CD8-positive, alpha-beta T cell (primary cell): ENCODE measurements at regions of chr4 and their contacts with region 1.

Region 1: DNA sequence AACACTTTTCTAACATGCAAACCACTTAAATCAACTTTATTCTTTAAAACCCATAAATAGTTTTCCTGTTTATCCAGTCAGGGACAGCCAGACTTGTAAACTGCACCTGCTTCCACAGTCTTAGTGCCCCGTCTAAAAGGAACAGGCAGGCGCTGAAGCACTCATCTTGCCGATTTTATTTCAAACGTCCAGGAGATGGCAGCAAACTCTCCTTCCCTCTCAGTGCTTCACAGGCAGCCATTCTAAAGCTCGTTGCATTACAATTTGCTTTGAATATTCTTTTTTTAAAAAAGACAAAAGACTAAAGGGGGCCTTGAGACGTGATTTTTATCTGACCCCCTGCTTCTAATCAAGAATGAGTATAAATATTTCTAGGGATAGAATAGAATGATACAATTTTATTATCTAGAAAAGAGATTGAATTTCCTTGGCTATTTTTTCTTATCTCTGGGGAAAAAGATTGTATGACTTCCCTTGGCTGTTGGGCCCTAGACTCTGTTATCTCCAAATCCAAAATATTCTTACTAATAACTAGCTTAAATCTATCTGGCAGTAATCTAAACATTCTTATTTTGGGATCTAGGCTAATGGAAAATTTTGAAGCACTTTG is 93.6 kb upstream of the MYOZ2 start:
- DNase-seq: peak; percentile 7 to 82 (median 53)
- ATAC-seq: peak; percentile 95
- H3K4me3 ChIP-seq: no peak overlapping the region
- H3K4me3 Mint-ChIP-seq: no peak overlapping the region
- H3K27ac ChIP-seq: no peak overlapping the region
- H3K27ac Mint-ChIP-seq: no peak overlapping the region
- H3K4me1 ChIP-seq: no peaks in the 10 kb centered on the region
- H3K4me1 Mint-ChIP-seq: peaks cover 2% of the 10 kb centered on the region
- H3K27me3 ChIP-seq: no peaks in the 10 kb centered on the region
- H3K27me3 Mint-ChIP-seq: no peaks in the 10 kb centered on the region
- CTCF ChIP-seq: peak; percentile 66

Region 2: DNA sequence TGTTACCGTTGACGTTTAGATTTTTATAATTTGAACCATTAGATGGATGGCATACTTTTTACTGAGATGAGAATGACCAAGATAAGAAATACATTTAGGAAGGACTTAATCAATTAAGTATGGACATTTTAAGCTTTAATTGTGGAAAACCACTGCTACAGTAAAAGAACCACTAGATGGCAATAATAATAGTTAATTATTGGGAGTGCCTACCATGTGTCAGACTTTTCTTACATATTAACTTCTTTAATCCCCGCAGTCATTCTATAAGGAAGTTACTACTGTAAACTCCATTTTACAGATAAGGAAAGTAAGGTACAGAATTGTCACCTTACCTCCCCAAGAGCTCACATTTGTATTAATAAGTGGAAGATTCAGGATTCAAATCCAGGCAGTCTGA is 45.1 kb after region 1 on chr4:
- CTCF ChIA-PET with region 1: interaction called, 10 read pairs
- POLR2A ChIA-PET with region 1: no interaction called
- intact Hi-C with region 1: no loop called
- DNase-seq: no peak
- ATAC-seq: no peak
- H3K4me3 ChIP-seq: no peak overlapping the region
- H3K4me3 Mint-ChIP-seq: no peak overlapping the region
- H3K27ac ChIP-seq: no peak overlapping the region
- H3K27ac Mint-ChIP-seq: no peak overlapping the region
- H3K4me1 ChIP-seq: no peaks in the 10 kb centered on the region
- H3K4me1 Mint-ChIP-seq: no peaks in the 10 kb centered on the region
- H3K27me3 ChIP-seq: no peaks in the 10 kb centered on the region
- H3K27me3 Mint-ChIP-seq: no peaks in the 10 kb centered on the region
- CTCF ChIP-seq: no peak

Region 3: DNA sequence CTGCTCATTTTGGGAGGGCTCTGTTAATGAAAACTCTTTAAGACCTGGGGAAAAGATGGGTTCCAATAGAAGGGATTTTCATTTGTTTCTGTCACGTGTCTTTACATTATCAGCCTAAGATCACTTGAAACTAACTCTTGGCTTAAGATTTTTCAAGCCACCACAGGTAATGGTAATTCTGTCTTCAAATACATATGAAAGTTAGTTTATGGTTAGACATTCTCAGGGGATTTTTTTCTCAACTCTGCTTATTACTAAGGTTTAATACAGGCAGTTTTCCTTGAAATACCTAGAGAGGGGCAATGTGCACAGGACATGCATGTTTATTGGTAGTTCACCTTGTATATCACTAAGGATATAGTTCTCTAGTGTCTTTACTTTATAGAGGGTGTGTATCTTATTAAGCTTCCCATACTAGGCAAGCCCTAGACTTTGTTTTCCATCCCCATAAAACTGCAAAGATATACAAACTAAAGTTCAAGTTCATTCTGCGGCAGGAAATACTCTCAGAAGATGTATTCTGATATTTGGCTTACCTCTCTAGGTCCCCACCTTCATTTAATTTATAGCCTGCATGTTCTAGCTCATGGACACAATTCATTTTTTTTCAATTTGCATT is 55.3 kb after region 1 on chr4:
- CTCF ChIA-PET with region 1: no interaction called
- POLR2A ChIA-PET with region 1: no interaction called
- intact Hi-C with region 1: no loop called
- DNase-seq: no peak
- ATAC-seq: no peak
- H3K4me3 ChIP-seq: no peak overlapping the region
- H3K4me3 Mint-ChIP-seq: no peak overlapping the region
- H3K27ac ChIP-seq: no peak overlapping the region
- H3K27ac Mint-ChIP-seq: no peak overlapping the region
- H3K4me1 ChIP-seq: no peaks in the 10 kb centered on the region
- H3K4me1 Mint-ChIP-seq: no peaks in the 10 kb centered on the region
- H3K27me3 ChIP-seq: no peaks in the 10 kb centered on the region
- H3K27me3 Mint-ChIP-seq: peaks cover 4% of the 10 kb centered on the region
- CTCF ChIP-seq: no peak

Region 4: DNA sequence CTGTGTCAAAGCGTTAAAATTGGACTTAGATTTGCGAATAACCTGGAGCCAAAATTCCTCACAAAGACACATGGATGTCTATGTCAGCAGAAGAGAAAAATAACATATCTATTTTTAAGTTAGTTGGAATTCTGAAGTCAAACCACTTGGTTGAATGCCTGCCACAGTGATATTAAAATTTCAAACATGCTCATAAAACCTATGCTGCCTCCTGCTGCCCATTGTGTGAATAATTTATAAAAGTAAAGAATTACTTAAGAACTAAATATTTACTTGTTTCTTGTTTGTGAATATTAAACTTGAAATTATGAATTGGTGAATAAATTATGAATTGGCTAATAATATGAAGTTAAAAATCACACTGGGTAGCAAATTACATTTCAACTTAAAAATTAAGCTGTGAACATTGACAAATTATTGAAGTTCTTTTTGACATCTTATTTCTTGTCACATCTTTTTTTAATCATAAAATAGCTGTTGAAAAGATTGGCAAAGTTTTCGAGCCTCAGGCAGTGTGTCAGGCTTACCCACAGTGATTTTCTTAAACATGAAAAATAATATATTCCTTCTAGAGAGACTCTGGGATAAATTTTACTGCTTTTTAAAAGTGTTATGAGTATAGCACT is 244.4 kb after region 1 on chr4:
- CTCF ChIA-PET with region 1: interaction called, 20 read pairs
- POLR2A ChIA-PET with region 1: no interaction called
- intact Hi-C with region 1: loop called (anchors 1 kb)
- DNase-seq: peak in 5 of 9 experiments; percentile 21 to 69 (median 34)
- ATAC-seq: peak; percentile 55
- H3K4me3 ChIP-seq: no peak overlapping the region
- H3K4me3 Mint-ChIP-seq: no peak overlapping the region
- H3K27ac ChIP-seq: no peak overlapping the region
- H3K27ac Mint-ChIP-seq: no peak overlapping the region
- H3K4me1 ChIP-seq: peaks cover 3% of the 10 kb centered on the region
- H3K4me1 Mint-ChIP-seq: peaks cover 30% of the 10 kb centered on the region
- H3K27me3 ChIP-seq: no peaks in the 10 kb centered on the region
- H3K27me3 Mint-ChIP-seq: no peaks in the 10 kb centered on the region
- CTCF ChIP-seq: peak; percentile 81

Region 5: GRCh38 chr4:119300101-119300978 is 258.3 kb after region 1 on chr4:
- CTCF ChIA-PET with region 1: interaction called, 15 read pairs
- POLR2A ChIA-PET with region 1: interaction called, 4 read pairs
- intact Hi-C with region 1: no loop called
- DNase-seq: peak; percentile 79 to 95 (median 89)
- ATAC-seq: peak; percentile 94
- H3K4me3 ChIP-seq: peak overlapping the region; percentile 92 to 97
- H3K4me3 Mint-ChIP-seq: peak overlapping the region; percentile 99
- H3K27ac ChIP-seq: peak overlapping the region; percentile 93 to 95
- H3K27ac Mint-ChIP-seq: peak overlapping the region; percentile 99
- H3K4me1 ChIP-seq: peaks cover 20% of the 10 kb centered on the region
- H3K4me1 Mint-ChIP-seq: peaks cover 35% of the 10 kb centered on the region
- H3K27me3 ChIP-seq: no peaks in the 10 kb centered on the region
- H3K27me3 Mint-ChIP-seq: no peaks in the 10 kb centered on the region
- CTCF ChIP-seq: no peak

Region 6: DNA sequence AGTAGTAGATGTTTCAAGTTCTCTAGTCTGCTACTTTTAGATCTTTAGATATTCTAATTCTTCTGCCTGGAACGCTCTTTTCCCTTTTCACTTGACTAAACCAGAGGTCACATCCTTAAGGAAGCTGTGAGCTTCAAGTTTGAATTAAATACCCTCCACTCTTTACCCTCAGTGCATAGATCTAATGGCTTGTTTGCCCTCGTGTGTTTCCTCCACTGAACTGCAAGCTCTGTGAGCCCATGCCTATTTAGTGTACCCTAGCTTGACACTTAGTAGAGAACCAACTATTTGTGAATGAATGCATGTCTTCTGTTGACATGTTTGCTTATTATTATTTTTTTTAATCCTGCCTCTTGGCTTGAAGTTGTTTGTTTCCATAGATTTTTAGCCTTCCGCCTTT is 448.3 kb after region 1 on chr4:
- CTCF ChIA-PET with region 1: interaction called, 5 read pairs
- POLR2A ChIA-PET with region 1: no interaction called
- intact Hi-C with region 1: loop called in 1 of 2 experiments (anchors 10 kb)
- DNase-seq: peak in 1 of 9 experiments; percentile 8
- ATAC-seq: no peak
- H3K4me3 ChIP-seq: no peak overlapping the region
- H3K4me3 Mint-ChIP-seq: no peak overlapping the region
- H3K27ac ChIP-seq: no peak overlapping the region
- H3K27ac Mint-ChIP-seq: no peak overlapping the region
- H3K4me1 ChIP-seq: no peaks in the 10 kb centered on the region
- H3K4me1 Mint-ChIP-seq: no peaks in the 10 kb centered on the region
- H3K27me3 ChIP-seq: no peaks in the 10 kb centered on the region
- H3K27me3 Mint-ChIP-seq: no peaks in the 10 kb centered on the region
- CTCF ChIP-seq: no peak

Region 7: GRCh38 chr4:119628308-119629141 is 586.5 kb after region 1 on chr4 and contains the start of gene PDE5A:
- CTCF ChIA-PET with region 1: no interaction called
- POLR2A ChIA-PET with region 1: no interaction called
- intact Hi-C with region 1: loop called in 1 of 2 experiments (anchors 5 kb)
- DNase-seq: peak; percentile 52 to 85 (median 76)
- ATAC-seq: peak; percentile 76
- H3K4me3 ChIP-seq: peak within 1 kb of the TSS; percentile 73 to 78
- H3K4me3 Mint-ChIP-seq: peak within 1 kb of the TSS; percentile 88
- H3K27ac ChIP-seq: peak within 1 kb of the TSS in 1 of 2 experiments; percentile 50
- H3K27ac Mint-ChIP-seq: peak within 1 kb of the TSS; percentile 71
- H3K4me1 ChIP-seq: peaks cover 9% of the 10 kb centered on the region
- H3K4me1 Mint-ChIP-seq: peaks cover 23% of the 10 kb centered on the region
- H3K27me3 ChIP-seq: no peaks in the 10 kb centered on the region
- H3K27me3 Mint-ChIP-seq: peaks cover 7% of the 10 kb centered on the region
- CTCF ChIP-seq: peak; percentile 74
- total RNA-seq, gene PDE5A: 0.11 to 0.25 TPM

Region 8: DNA sequence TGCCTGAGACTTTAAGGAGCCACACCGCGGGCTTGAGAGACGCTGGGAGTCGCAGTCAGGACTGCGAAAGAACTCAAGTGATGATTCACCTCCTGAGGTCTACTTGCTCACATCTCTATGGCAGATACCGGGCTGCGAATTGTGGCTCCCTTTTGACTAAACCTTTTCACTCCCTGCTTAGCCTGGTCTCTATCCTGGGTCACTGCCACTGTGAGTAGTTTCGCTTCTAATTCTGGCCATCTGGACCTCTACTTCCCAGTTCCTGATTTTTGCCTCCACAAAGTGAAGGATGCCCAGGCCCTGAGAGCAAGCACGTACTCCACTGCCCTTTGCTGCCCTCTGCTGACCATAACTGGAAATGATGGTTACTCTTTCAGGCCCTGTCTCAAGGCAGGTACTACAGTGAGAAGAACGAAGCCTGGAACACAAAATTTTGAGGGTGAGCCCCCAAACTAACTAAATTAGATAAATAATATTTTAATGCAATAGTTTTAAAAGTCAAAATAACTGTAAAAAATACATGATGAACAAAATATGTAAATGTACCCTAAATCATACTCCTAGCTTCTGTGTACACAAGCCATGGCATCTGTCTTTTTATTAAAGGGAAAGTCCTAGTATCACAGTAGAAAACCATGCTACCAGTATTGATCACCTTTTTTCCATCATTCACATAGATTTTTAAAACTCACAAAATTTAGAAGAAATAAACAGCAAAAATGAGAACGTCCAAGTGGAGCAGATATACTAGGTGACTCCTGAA is 1007.9 kb after region 1 on chr4:
- CTCF ChIA-PET with region 1: no interaction called
- POLR2A ChIA-PET with region 1: no interaction called
- intact Hi-C with region 1: loop called in 1 of 2 experiments (anchors 10 kb)
- DNase-seq: peak; percentile 46 to 80 (median 73)
- ATAC-seq: peak; percentile 98
- H3K4me3 ChIP-seq: no peak overlapping the region
- H3K4me3 Mint-ChIP-seq: peak overlapping the region; percentile 54
- H3K27ac ChIP-seq: no peak overlapping the region
- H3K27ac Mint-ChIP-seq: no peak overlapping the region
- H3K4me1 ChIP-seq: no peaks in the 10 kb centered on the region
- H3K4me1 Mint-ChIP-seq: peaks cover 2% of the 10 kb centered on the region
- H3K27me3 ChIP-seq: no peaks in the 10 kb centered on the region
- H3K27me3 Mint-ChIP-seq: no peaks in the 10 kb centered on the region
- CTCF ChIP-seq: peak; percentile 90